Pancreas (tissue), 10 donors: ENCODE measurements at regions of chr22 and their contacts with region 1.

Region 1: DNA sequence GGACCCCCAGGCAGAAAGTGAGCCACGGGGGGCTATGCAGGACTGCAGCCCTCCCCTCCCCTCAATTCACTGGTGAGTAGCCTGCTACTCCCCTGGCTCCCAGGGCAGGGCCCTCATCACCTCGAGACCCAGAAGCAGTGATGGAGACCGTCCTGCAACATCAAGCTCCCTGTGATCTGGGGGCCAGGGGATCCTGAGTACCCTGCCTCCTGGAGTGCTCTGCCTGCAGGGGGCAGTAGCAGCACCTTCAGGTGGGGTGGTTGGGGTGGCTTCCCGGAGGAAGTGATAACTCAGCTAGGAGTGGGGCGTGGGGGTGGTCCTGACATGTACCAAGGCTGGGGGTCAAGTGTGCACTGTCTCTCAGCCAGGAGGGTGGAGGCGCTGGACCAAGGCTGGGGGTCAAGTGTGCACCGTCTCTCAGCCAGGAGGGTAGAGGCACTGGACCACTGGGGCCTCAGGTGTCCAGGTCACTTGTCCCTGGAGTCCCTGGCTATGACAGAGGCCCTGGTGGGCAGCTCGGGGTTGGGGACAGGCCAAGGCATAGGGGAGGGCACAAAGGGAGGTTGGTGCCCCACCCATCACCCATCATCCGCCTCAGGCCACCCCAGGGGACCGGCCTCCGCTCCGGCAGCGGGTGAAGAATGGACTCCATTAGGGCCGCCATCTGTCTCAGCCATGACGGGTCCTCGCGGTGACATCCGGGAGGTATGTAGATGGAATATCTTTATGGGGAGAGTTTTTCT is 9.4 kb downstream of the RTN4R start:
- DNase-seq: no peak
- ATAC-seq: no peak
- H3K4me3 ChIP-seq: no peak overlapping the region
- H3K27ac ChIP-seq: no peak overlapping the region
- H3K4me1 ChIP-seq: peaks cover 0 to 3% (median 0%) of the 10 kb centered on the region in 3 donors
- H3K27me3 ChIP-seq: no peaks in the 10 kb centered on the region
- CTCF ChIP-seq: no peak

Region 2: GRCh38 chr22:20141186-20142077 is 117.3 kb before region 1 on chr22:
- intact Hi-C with region 1: loop called in 1 of 3 experiments (anchors 10 kb)
- DNase-seq: peak in 1 of 6 donors; percentile 67
- ATAC-seq: no peak
- H3K4me3 ChIP-seq: no peak overlapping the region
- H3K27ac ChIP-seq: no peak overlapping the region
- H3K4me1 ChIP-seq: no peaks in the 10 kb centered on the region
- H3K27me3 ChIP-seq: no peaks in the 10 kb centered on the region
- CTCF ChIP-seq: no peak

Region 3: GRCh38 chr22:20194681-20195593 is 63.8 kb before region 1 on chr22:
- intact Hi-C with region 1: loop called in 1 of 3 experiments (anchors 10 kb)
- DNase-seq: no peak
- ATAC-seq: no peak
- H3K4me3 ChIP-seq: no peak overlapping the region
- H3K27ac ChIP-seq: no peak overlapping the region
- H3K4me1 ChIP-seq: no peaks in the 10 kb centered on the region
- H3K27me3 ChIP-seq: no peaks in the 10 kb centered on the region
- CTCF ChIP-seq: no peak